ENCODE measurements at regions of chr19 and their contacts with region 1.

Region 1: GRCh38 chr19:9584073-9584833 is at the start of gene ZNF121:
- DNase-seq: peak; percentile 67 to 76 (median 73)
- H3K4me3 ChIP-seq: peak within 1 kb of the TSS; percentile 99 to 100
- H3K4me3 Mint-ChIP-seq: peak within 1 kb of the TSS; percentile 94 to 99 (median 97)
- H3K27ac ChIP-seq: peak within 1 kb of the TSS; percentile 97
- H3K27ac Mint-ChIP-seq: peak within 1 kb of the TSS; percentile 96 to 99 (median 98)
- H3K4me1 ChIP-seq: peaks cover 26% of the 10 kb centered on the region
- H3K4me1 Mint-ChIP-seq: peaks cover 21 to 55% (median 34%) of the 10 kb centered on the region in 4 donors
- H3K27me3 ChIP-seq: no peaks in the 10 kb centered on the region
- H3K27me3 Mint-ChIP-seq: peaks cover 2 to 4% of the 10 kb centered on the region in 2 donors
- total RNA-seq, gene ZNF121: 47.2 to 53.0 TPM

Region 2: GRCh38 chr19:9205501-9206113 is 378.6 kb before region 1 on chr19:
- CTCF ChIA-PET with region 1: interaction called, 15 read pairs
- POLR2A ChIA-PET with region 1: no interaction called
- intact Hi-C with region 1: loop called (anchors 1 kb)
- DNase-seq: peak; percentile 43 to 59 (median 52)
- H3K4me3 ChIP-seq: no peak overlapping the region
- H3K4me3 Mint-ChIP-seq: peak overlapping the region in 7 of 8 donors; percentile 6 to 62 (median 57)
- H3K27ac ChIP-seq: no peak overlapping the region
- H3K27ac Mint-ChIP-seq: no peak overlapping the region
- H3K4me1 ChIP-seq: peaks cover 4% of the 10 kb centered on the region
- H3K4me1 Mint-ChIP-seq: peaks cover 0 to 9% (median 3%) of the 10 kb centered on the region in 4 donors
- H3K27me3 ChIP-seq: no peaks in the 10 kb centered on the region
- H3K27me3 Mint-ChIP-seq: peaks cover 0 to 13% of the 10 kb centered on the region in 2 donors

Region 3: DNA sequence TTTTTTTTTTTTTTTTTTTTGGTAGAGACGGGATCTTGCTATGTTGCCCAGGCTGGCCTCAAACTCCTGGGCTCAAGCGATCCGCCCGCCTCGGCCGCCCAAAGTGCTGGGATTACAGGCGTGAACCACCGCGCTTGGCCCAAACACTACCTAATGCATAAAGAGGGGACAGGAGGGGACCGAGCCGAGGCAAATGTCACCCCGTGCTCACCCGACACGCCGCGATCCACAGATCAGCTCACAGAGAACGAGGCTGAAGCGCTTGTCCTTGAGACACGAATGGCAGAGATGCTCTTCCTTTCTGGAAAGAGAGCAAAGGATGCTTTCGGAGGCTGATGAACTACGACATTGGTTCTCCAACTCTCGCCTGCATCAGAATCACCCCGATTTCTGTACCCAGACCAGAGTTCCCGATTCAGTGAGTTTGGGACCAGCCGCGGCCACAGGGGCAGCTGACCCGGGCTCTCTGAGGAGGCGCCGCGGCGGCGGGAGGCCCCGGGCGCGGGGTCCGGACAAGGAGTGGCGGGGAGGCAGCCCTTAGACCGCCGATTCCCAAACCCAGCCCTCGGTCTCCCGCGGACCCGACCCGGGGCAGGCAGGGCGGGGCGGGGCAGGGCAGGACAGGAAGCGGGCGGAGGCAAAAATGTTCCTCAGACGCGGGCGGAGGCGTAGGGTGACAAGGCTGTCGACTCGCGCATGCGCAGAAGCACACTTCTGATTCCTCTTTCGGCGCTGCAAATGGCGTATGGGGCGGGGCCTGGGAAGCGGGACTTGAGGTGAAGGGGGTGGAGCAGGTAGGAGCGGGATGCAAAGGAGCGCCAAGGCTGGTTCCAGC is 274.9 kb before region 1 on chr19 and contains the start of gene ZNF699:
- CTCF ChIA-PET with region 1: no interaction called
- POLR2A ChIA-PET with region 1: no interaction called
- intact Hi-C with region 1: loop called (anchors 1 kb)
- DNase-seq: peak; percentile 97 to 100 (median 97)
- H3K4me3 ChIP-seq: peak within 1 kb of the TSS; percentile 92 to 93
- H3K4me3 Mint-ChIP-seq: peak within 1 kb of the TSS; percentile 89 to 99 (median 94)
- H3K27ac ChIP-seq: peak within 1 kb of the TSS; percentile 96
- H3K27ac Mint-ChIP-seq: peak within 1 kb of the TSS; percentile 88 to 99 (median 97)
- H3K4me1 ChIP-seq: peaks cover 23% of the 10 kb centered on the region
- H3K4me1 Mint-ChIP-seq: peaks cover 21 to 47% (median 34%) of the 10 kb centered on the region in 4 donors
- H3K27me3 ChIP-seq: no peaks in the 10 kb centered on the region
- H3K27me3 Mint-ChIP-seq: no peaks in the 10 kb centered on the region
- total RNA-seq, gene ZNF699: 20.9 to 22.1 TPM

Region 4: GRCh38 chr19:9621156-9622037 is 37.1 kb after region 1 on chr19 and contains the start of gene ZNF561:
- CTCF ChIA-PET with region 1: interaction called, 12 read pairs
- POLR2A ChIA-PET with region 1: interaction called, 3 read pairs
- intact Hi-C with region 1: loop called (anchors 1 kb)
- DNase-seq: peak; percentile 89 to 92 (median 90)
- H3K4me3 ChIP-seq: peak within 1 kb of the TSS; percentile 87 to 94
- H3K4me3 Mint-ChIP-seq: peak within 1 kb of the TSS; percentile 96 to 100 (median 99)
- H3K27ac ChIP-seq: peak within 1 kb of the TSS; percentile 88
- H3K27ac Mint-ChIP-seq: peak within 1 kb of the TSS; percentile 100
- H3K4me1 ChIP-seq: peaks cover 21% of the 10 kb centered on the region
- H3K4me1 Mint-ChIP-seq: peaks cover 16 to 29% (median 22%) of the 10 kb centered on the region in 4 donors
- H3K27me3 ChIP-seq: no peaks in the 10 kb centered on the region
- H3K27me3 Mint-ChIP-seq: peaks cover 0 to 3% of the 10 kb centered on the region in 2 donors
- total RNA-seq, gene ZNF561: 67.2 to 75.8 TPM